Activated CD4-positive, alpha-beta T cell treated with anti-CD3 and anti-CD28 coated beads, Interleukin-2, amount 10 ng/mL, durations not matched to agents 7 days and 5 days (primary cell): ENCODE measurements at regions of chr2 and their contacts with region 1.

Region 1: GRCh38 chr2:102240640-102241370 is 54.0 kb downstream of the IL1RL2 start:
- DNase-seq: peak; percentile 87
- H3K4me3 Mint-ChIP-seq: no peak overlapping the region
- H3K27ac Mint-ChIP-seq: peak overlapping the region; percentile 3
- H3K4me1 Mint-ChIP-seq: peaks cover 32% of the 10 kb centered on the region
- H3K27me3 Mint-ChIP-seq: no peaks in the 10 kb centered on the region

Region 2: DNA sequence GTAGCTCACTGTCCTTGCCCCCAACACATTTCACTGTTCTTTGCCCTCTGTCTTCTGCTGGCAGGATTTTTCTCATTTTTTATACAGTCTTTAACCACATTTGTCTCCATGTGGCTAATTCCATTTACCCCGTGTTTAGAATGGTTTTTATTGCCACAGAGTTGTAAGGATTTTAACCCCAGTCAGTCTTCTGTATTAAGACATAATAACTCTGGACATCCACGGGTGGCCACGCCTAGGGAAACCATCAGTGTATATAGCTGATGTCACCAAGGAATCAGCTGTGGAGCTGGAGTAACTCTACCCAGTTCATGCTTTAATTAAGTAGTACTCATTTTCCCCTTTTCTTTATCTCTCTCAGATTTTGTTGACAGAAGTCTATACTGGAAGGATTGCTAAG is 403.5 kb before region 1 on chr2:
- CTCF ChIA-PET with region 1: no interaction called
- POLR2A ChIA-PET with region 1: no interaction called
- DNase-seq: no peak
- H3K4me3 Mint-ChIP-seq: no peak overlapping the region
- H3K27ac Mint-ChIP-seq: no peak overlapping the region
- H3K4me1 Mint-ChIP-seq: peaks cover 16% of the 10 kb centered on the region
- H3K27me3 Mint-ChIP-seq: no peaks in the 10 kb centered on the region

Region 3: DNA sequence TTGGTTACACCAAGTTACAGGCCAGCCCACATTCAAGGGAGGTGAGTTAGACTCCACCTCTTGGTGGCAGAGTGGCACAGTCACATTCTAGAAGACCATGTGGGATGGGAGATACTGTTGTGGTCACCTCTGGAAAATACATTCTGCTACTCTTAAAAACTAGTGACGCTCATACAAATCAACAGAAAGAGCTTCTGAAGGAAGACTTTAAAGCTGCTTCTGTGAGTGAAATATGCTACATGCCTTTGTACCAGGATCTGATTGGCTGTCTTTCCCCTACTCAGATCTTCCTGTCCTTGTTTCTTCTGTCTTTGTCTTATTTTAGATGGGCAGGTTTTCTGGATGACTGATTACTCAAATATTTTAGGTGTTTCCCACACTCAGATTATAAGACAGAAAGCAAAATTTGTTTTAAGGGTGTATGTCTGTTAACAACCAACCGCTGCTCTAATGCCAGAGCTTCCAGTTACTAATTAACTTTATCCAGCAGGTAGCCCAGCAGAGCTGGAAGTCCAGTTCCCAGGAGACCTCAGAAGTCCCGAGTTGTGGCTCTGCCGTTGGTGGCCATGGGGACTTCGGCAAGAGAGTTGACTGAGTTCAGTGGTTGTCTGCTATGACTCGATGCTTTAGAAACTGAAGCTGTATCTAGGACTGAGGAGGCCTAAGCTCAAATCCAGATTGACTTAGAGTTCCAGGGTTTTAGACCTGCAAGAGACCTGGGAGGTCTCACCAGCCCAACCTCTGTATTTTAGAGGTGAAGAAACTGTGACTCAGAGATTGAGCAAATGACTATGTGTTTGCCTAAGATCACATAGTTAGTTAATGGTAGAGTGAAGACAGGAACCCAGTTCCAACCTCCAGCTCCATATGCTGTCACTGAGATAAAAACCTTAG is 241.7 kb before region 1 on chr2:
- CTCF ChIA-PET with region 1: interaction called, 25 read pairs
- POLR2A ChIA-PET with region 1: interaction called, 3 read pairs
- DNase-seq: no peak
- H3K4me3 Mint-ChIP-seq: no peak overlapping the region
- H3K27ac Mint-ChIP-seq: no peak overlapping the region
- H3K4me1 Mint-ChIP-seq: peaks cover 26% of the 10 kb centered on the region
- H3K27me3 Mint-ChIP-seq: no peaks in the 10 kb centered on the region

Region 4: GRCh38 chr2:102020596-102021181 is 220.1 kb before region 1 on chr2:
- CTCF ChIA-PET with region 1: interaction called, 25 read pairs
- POLR2A ChIA-PET with region 1: no interaction called
- DNase-seq: peak; percentile 84
- H3K4me3 Mint-ChIP-seq: no peak overlapping the region
- H3K27ac Mint-ChIP-seq: no peak overlapping the region
- H3K4me1 Mint-ChIP-seq: peaks cover 11% of the 10 kb centered on the region
- H3K27me3 Mint-ChIP-seq: no peaks in the 10 kb centered on the region

Region 5: GRCh38 chr2:102251042-102251848 is 10.4 kb after region 1 on chr2:
- CTCF ChIA-PET with region 1: interaction called, 44 read pairs
- POLR2A ChIA-PET with region 1: no interaction called
- DNase-seq: peak; percentile 56
- H3K4me3 Mint-ChIP-seq: peak overlapping the region; percentile 60
- H3K27ac Mint-ChIP-seq: peak overlapping the region; percentile 78
- H3K4me1 Mint-ChIP-seq: peaks cover 43% of the 10 kb centered on the region
- H3K27me3 Mint-ChIP-seq: no peaks in the 10 kb centered on the region

Region 6: GRCh38 chr2:102301867-102302362 is 61.1 kb after region 1 on chr2:
- CTCF ChIA-PET with region 1: interaction called, 11 read pairs
- POLR2A ChIA-PET with region 1: no interaction called
- DNase-seq: peak; percentile 63
- H3K4me3 Mint-ChIP-seq: peak overlapping the region; percentile 4
- H3K27ac Mint-ChIP-seq: peak overlapping the region; percentile 47
- H3K4me1 Mint-ChIP-seq: peaks cover 27% of the 10 kb centered on the region
- H3K27me3 Mint-ChIP-seq: peaks cover 7% of the 10 kb centered on the region

Region 7: GRCh38 chr2:102418421-102418961 is 177.7 kb after region 1 on chr2:
- CTCF ChIA-PET with region 1: no interaction called
- POLR2A ChIA-PET with region 1: no interaction called
- DNase-seq: peak; percentile 33
- H3K4me3 Mint-ChIP-seq: peak overlapping the region; percentile 66
- H3K27ac Mint-ChIP-seq: peak overlapping the region; percentile 94
- H3K4me1 Mint-ChIP-seq: peaks cover 65% of the 10 kb centered on the region
- H3K27me3 Mint-ChIP-seq: no peaks in the 10 kb centered on the region

Region 8: DNA sequence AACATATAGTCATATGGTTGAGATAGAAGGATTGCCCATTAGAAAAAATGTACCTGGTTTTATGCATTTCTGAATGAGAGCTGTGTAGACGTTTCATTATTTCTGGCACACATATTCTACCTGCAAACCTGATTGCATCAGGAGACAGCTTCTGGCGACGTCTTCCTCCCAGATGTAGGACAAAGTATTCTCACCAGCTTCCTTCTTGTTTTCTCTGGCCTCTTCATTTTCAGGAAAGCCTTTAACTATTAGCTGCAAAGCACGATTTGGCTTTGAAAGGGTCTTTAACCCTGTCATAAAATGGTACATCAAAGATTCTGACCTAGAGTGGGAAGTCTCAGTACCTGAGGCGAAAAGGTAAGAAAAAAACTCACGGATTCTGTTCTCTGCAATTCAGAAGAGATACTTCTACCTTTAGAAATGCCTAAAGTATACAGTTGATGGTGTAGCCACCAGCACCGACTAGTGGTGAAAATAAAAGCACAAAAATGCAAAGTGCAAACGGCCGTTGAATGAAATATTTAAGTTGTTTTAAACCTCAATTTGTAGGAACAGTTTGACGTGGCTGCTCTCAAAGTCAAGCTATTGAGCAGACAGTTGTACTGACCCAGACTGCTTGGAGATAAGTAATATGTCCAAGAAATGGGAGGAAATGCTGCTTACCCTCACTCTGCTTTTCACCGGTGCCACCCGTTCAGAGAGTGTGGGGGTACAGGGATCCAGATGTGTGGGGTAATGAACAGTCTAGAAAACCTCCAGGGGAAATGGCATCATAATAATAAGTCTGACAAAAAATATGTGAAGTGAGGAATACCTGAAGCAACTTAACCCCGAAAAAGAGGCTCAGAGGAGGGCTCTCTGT is 202.4 kb after region 1 on chr2:
- CTCF ChIA-PET with region 1: interaction called, 13 read pairs
- POLR2A ChIA-PET with region 1: no interaction called
- DNase-seq: peak; percentile 68
- H3K4me3 Mint-ChIP-seq: peak overlapping the region; percentile 0
- H3K27ac Mint-ChIP-seq: peak overlapping the region; percentile 70
- H3K4me1 Mint-ChIP-seq: peaks cover 11% of the 10 kb centered on the region
- H3K27me3 Mint-ChIP-seq: no peaks in the 10 kb centered on the region